ENCODE measurements at regions of chr2 and their contacts with region 1.

Region 1: GRCh38 chr2:88852753-88853402 is 161.4 kb downstream of the RPIA start:
- DNase-seq: no peak
- CTCF ChIP-seq: no peak

Region 2: GRCh38 chr2:88838165-88838635 is 14.7 kb before region 1 on chr2:
- CTCF ChIA-PET with region 1: interaction called, 460 read pairs
- POLR2A ChIA-PET with region 1: interaction called, 79 read pairs
- DNase-seq: peak; percentile 21
- CTCF ChIP-seq: no peak

Measured in GM10248 (cell line).